ENCODE measurements at regions of chr13 and their contacts with region 1.

Region 1: DNA sequence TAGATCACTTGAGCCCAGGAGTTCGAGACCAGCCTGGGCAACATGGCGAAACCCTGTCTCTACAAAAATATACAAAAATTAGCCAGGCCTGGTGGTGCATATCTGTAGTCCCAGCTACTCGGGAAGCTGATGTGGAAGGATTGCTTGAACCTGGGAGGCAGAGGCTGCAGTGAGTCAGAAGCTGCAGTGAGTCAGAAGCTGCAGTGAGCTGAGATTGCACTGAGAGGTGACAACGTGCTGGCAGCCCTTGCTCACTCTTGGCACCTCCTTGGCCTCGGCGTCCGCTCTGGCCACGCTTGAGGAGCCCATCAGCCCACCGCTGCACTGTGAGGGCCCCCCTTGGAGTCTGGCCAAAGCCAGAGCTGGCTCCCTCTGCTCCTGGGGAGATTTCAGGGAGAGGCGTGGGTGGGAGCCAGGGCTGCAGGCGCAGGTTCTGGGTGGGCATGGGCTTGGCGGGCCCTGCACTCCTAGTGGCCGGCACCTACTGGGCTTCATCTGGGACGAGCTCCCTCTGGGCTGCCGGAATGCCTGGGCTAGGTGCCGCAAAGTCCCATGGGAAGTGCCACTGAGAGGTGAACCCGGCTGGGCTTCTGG is 39.5 kb upstream of the RPL21 start:
- DNase-seq: no peak
- H3K27ac ChIP-seq: no peak overlapping the region
- CTCF ChIP-seq: no peak

Region 2: DNA sequence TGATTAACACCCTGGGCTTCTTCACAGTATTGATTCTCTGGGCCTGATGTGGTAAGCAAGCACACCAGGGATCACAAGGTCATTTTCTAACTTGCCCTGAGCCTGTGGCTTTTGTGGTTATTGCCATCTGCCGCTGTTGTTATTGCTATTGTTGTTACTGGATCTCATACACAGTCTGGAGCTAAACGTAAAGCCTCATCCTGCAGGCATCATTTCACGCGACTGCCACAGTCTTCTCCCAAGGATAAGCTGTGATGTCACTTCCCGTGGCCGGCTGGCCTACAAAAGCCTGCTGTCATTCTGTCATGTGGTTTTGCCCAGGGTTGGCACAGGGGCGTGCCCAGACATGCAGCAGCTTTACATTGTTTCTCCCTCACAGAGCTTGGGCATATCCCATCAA is 297.2 kb before region 1 on chr13:
- CTCF ChIA-PET with region 1: no interaction called
- POLR2A ChIA-PET with region 1: no interaction called
- DNase-seq: peak; percentile 38
- H3K27ac ChIP-seq: no peak overlapping the region
- CTCF ChIP-seq: no peak

Region 3: DNA sequence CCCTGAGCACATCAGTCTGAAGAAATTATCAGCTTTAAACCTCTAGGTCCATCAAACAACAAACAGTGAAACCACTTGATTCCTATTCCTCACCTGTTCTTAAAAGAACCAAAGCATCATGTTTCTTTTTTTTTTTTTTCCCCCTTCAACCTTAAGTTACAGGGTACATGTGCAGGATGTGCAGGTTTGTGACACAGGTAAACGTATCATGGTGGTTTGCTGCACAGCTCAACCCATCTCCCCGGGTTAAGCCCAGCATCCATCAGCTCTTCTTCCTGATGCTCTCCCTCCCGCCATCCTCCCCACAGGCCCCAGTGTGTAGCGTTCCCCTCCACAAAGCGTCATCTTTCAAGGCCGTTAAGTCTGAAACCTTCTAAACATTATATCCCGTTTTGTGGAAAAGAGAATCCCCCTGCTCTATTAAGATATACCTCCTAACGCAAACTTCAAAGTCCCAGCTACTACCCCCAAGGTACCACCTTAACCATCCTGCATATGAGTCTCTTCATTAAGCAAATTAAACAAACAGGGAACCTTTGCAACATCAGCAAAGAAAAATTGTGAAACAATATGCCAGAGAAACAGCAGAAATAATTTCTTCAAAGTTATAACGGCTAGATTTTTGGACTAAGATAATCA is 51.1 kb before region 1 on chr13:
- CTCF ChIA-PET with region 1: interaction called, 10 read pairs
- POLR2A ChIA-PET with region 1: no interaction called
- DNase-seq: no peak
- H3K27ac ChIP-seq: no peak overlapping the region
- CTCF ChIP-seq: no peak

Region 4: DNA sequence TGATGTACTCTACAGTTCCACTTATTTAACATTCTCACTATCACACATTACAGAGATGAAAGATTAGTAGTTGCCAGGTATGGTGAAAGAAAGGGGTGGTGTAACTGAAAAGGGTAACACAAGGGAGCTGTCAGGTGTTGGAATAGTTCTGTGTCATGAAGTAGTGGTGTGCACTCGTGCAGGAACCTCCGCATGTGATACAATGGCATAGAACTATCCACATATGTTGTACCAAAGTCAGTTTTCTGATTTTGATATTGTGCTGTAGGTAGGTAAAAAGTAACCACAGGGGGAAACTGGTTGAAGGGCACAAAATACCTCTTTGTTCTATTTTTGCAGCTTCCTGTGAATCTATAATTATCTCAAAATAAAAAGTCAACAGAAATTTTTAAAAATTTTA is 15.1 kb after region 1 on chr13:
- CTCF ChIA-PET with region 1: no interaction called
- POLR2A ChIA-PET with region 1: no interaction called
- DNase-seq: no peak
- H3K27ac ChIP-seq: no peak overlapping the region
- CTCF ChIP-seq: no peak

Measured in RWPE1 (cell line).